BJ (cell line): ENCODE measurements at regions of chr2 and their contacts with region 1.

Region 1: GRCh38 chr2:219171231-219171651 is 1.4 kb upstream of the SLC23A3 start:
- DNase-seq: peak; percentile 88
- H3K4me3 ChIP-seq: no peak overlapping the region
- H3K27me3 ChIP-seq: no peaks in the 10 kb centered on the region
- CTCF ChIP-seq: peak; percentile 78

Region 2: DNA sequence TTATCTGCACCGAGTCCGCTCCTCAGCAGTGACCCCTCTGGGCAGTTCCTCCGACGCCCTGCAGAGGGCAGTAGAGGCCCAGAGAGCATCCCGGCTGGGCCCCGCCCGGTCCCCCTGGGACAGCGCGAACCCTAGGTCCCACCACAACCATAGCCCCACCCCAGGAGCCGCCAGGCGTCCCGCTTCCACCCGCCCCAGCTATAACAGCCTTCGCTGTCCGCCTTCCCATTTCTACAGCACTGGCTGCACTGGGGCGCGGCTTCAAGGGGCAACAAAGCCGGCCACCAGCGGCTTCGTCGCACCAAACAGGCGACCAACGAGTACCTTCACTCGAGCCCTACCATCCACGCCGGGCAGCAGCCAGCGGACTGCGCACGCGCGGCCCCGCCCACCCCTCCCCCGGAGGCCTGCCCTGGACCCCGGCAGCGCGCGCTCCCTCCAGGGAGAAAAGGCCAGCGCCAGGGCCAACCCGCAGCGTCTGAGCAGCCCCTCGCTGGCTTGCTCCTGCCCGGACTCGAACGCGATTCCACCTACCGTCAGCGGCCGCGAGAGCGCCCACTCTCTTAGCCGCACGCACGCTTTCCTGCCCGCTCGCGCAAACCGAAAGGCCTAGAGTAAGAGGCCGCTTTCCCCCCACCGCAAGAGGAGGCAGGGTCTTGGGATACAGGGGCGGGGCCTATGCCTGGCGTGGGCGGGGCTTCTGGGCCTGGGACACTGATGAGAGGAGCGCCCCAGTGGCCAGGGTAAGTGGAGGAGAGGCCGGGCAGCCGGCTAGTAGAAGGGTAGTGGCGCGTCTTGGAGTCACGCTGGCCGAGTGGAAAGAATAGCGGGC is 10.8 kb before region 1 on chr2 and contains the start of gene NHEJ1:
- CTCF ChIA-PET with region 1: interaction called, 15 read pairs
- POLR2A ChIA-PET with region 1: no interaction called
- DNase-seq: peak; percentile 63
- H3K4me3 ChIP-seq: peak within 1 kb of the TSS; percentile 73
- H3K27me3 ChIP-seq: no peaks in the 10 kb centered on the region
- CTCF ChIP-seq: peak; percentile 99
- polyA plus RNA-seq, gene NHEJ1: 23.9 and 24.1 TPM in 2 replicates

Region 3: DNA sequence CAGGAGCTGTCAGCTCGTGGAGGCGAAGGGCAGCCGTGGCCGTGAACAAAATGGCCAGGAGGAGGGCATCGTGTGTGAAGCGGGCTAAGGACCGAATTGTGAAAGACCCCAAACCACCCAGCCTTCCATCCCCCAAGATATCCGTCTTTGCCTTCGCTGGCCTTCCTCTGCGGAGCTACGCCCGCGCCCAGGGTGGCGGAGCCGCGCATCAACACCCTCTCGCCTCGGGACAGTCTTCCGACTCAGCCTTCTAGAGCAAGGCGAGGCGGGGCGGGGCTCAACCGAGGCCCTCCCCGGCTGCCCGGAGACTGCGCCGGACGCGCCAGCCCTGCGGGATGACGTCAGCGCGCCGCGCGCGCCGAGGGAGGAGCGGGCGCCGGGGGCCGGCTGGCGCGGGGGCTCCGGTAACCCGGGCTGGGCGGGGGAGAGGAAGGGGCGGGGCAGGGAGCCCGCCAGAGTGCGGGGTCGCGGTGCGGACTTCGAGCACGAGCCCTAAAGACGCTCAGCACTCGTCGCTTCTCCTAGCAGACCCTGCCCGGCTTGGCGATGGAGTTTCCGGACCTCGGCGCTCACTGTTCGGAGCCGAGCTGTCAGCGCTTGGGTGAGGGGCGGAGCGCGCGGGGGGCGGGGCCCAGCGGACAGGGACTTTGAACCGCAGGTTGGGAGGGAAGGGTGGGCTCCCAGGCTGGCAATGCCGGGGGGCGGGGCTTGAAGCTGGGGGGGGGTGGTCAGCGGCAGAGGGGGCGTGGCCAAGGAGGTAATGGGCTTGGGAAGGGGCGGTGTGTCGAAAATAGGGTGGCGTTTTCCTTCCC is 35.4 kb after region 1 on chr2 and contains the start of gene ZFAND2B:
- CTCF ChIA-PET with region 1: interaction called, 13 read pairs
- POLR2A ChIA-PET with region 1: no interaction called
- DNase-seq: peak; percentile 55
- H3K4me3 ChIP-seq: peak within 1 kb of the TSS; percentile 63
- H3K27me3 ChIP-seq: no peaks in the 10 kb centered on the region
- CTCF ChIP-seq: 0 out of 2 replicates have a peak, but pooled peaks have one; percentile 11
- polyA plus RNA-seq, gene ZFAND2B: 45.6 and 62.9 TPM in 2 replicates

Region 4: DNA sequence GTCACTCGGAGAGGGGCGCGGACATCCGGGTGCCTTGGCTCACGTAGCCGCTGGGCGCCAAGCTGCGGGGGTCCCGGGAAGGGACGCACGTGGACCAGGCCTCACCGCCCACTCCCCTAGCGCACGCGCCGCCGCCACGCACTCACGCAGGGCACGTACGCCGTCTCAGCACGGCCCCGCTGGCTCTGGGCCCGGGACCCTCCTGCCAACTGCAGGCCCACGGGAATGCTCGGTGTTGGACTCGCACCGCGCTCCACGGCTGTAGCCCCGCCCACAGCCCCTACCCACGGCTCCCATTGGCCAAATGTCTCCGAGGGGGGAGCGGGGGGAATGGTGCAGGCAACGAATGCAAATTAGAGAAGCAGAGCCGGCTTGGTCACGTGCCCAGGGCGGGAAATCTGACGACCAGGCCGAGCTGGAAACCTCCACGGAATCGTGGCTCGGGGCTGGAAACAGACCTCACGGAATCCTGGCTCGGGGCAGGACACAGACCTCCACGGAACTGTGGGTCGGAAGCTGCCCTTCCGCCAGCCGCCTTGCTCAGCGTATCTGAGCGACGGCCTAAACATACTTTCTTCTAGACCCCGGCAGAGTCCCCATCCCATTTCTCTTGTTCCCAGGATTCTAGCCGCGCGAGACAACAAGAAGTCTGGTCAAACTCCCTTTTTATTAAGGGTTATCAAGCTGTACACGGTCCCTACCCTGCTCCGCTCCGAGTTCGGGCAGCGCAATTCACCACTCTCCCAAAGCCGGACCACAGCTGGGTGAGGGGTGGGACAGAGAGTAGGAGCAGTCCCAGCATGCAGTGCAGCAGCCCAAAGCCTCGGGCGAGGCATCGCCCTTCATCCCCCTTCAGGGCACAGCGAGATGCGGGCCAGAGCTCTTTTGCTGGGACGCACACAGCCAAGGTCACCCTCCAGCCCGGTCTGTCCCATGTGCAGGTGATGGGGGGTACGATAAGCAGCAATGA is 47.8 kb after region 1 on chr2 and contains the start of gene ABCB6:
- CTCF ChIA-PET with region 1: interaction called, 10 read pairs
- POLR2A ChIA-PET with region 1: no interaction called
- DNase-seq: peak; percentile 54
- H3K4me3 ChIP-seq: peak within 1 kb of the TSS; percentile 43
- H3K27me3 ChIP-seq: no peaks in the 10 kb centered on the region
- CTCF ChIP-seq: no peak
- polyA plus RNA-seq, gene ABCB6: 20.3 and 33.4 TPM in 2 replicates